ENCODE measurements at regions of chr15 and their contacts with region 1.

Region 1: GRCh38 chr15:44711356-44712107 is at the start of gene B2M:
- DNase-seq: peak; percentile 97 to 98
- H3K4me3 ChIP-seq: peak within 1 kb of the TSS; percentile 77 to 99 (median 94)
- H3K27ac ChIP-seq: peak within 1 kb of the TSS; percentile 97 to 99
- H3K4me1 ChIP-seq: peaks cover 0 to 12% of the 10 kb centered on the region in 2 donors
- H3K27me3 ChIP-seq: no peaks in the 10 kb centered on the region
- CTCF ChIP-seq: no peak
- POLR2A ChIP-seq: peak; percentile 100
- total RNA-seq, gene B2M: 2,658 to 3,703 (median 3,086) TPM

Region 2: DNA sequence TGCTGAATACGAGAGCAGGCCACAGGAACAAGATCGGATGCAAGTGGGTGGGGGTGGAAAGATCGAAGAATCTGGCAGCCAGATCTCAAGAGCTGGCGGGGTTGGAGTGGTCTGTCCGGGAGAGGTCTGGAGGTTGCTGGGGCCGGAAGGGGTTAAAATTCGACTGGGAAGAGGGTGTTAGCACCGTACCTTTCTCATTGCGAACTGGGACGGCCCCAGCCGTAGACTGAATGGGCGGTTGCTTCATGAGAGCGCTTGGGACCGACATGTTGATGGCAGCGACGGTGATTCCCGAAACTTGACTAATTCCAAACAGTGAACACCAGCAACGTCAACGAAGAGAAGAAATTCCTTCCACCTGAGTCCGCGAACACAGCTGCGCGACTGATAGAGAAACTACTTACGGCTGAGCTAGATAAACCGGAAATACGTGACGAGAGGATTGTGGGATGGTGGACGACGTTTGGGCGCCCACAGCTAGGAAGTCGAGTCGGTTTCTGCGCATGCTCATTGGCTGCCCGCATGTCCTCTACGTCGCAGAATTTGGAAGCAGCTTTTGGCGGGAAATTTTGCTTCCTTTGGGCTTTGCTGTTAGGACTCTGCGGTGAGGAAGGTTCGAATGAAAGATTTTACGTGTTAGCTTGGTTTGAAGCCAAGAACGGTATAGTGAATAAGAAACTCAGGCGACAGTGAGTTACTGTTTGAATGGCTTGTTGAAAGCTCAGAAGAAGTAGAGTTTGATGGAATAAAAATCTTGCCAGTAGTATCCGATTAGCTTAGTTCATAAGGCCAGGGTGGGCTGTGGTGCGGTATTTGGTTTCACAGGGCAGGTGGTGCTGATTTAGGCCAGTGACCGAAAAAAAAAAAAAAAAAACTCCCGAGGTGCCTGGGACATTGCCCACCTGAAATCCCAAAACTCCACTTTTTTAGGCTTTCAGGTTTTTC is 887.0 kb before region 1 on chr15 and contains the start of gene MFAP1:
- intact Hi-C with region 1: no loop called
- DNase-seq: peak; percentile 90 to 94
- H3K4me3 ChIP-seq: peak within 1 kb of the TSS; percentile 67 to 93 (median 83)
- H3K27ac ChIP-seq: peak within 1 kb of the TSS; percentile 90 to 97
- H3K4me1 ChIP-seq: peaks cover 0 to 5% of the 10 kb centered on the region in 2 donors
- H3K27me3 ChIP-seq: no peaks in the 10 kb centered on the region
- CTCF ChIP-seq: no peak
- POLR2A ChIP-seq: peak; percentile 71
- total RNA-seq, gene MFAP1: 14.4 to 26.3 (median 15.7) TPM

Region 3: GRCh38 chr15:44726568-44727484 is 15.3 kb after region 1 on chr15:
- intact Hi-C with region 1: loop called (anchors 2 kb)
- DNase-seq: peak in 1 of 2 donors; percentile 30
- H3K4me3 ChIP-seq: peak overlapping the region in 1 of 3 donors; percentile 24
- H3K27ac ChIP-seq: peak overlapping the region; percentile 97 to 99
- H3K4me1 ChIP-seq: no peaks in the 10 kb centered on the region
- H3K27me3 ChIP-seq: no peaks in the 10 kb centered on the region
- CTCF ChIP-seq: no peak
- POLR2A ChIP-seq: no peak